ENCODE measurements at regions of chr3 and their contacts with region 1.

Region 1: DNA sequence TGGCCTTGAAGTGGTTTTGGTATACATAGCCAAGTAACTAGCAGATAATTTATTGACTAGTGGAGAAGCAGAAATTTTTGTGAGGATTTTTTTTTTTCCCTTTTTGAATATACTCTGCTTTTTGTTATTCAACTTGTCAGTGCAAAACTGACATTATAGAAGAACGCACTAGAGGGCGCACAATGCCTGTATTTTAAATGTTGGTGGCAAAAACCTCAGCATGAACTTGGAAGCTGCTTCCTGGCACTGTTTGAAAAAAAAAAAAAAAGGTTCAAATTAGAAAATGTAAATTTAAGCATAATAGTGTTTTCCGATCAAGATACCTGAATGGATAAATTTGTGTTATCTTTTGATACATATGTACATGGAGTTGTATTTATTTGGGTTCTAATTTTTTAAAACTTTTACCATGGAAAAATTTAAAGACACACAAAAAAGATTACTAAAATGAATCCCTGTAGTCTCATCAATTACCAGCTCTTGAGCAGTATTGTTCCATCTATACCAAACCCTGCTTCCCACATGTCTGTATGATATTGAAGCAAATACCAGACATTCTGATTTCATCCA is 56.0 kb downstream of the SLC25A26 start:
- DNase-seq: peak; percentile 39 to 76 (median 54)
- H3K4me3 ChIP-seq: no peak overlapping the region
- H3K4me3 Mint-ChIP-seq: no peak overlapping the region
- H3K27ac ChIP-seq: no peak overlapping the region
- H3K27ac Mint-ChIP-seq: peak overlapping the region; percentile 4 to 89 (median 60)
- H3K4me1 ChIP-seq: peaks cover 30% of the 10 kb centered on the region
- H3K4me1 Mint-ChIP-seq: peaks cover 42 to 48% (median 45%) of the 10 kb centered on the region in 3 donors
- H3K27me3 ChIP-seq: no peaks in the 10 kb centered on the region
- H3K27me3 Mint-ChIP-seq: no peaks in the 10 kb centered on the region

Region 2: GRCh38 chr3:66302288-66302687 is 25.5 kb after region 1 on chr3:
- CTCF ChIA-PET with region 1: interaction called, 14 read pairs
- POLR2A ChIA-PET with region 1: interaction called, 6 read pairs
- DNase-seq: peak; percentile 23 to 83 (median 58)
- H3K4me3 ChIP-seq: no peak overlapping the region
- H3K4me3 Mint-ChIP-seq: peak overlapping the region; percentile 41 to 70 (median 58)
- H3K27ac ChIP-seq: peak overlapping the region; percentile 94
- H3K27ac Mint-ChIP-seq: peak overlapping the region in 2 of 8 donors; percentile 97 to 99
- H3K4me1 ChIP-seq: peaks cover 85% of the 10 kb centered on the region
- H3K4me1 Mint-ChIP-seq: peaks cover 23 to 26% (median 25%) of the 10 kb centered on the region in 3 donors
- H3K27me3 ChIP-seq: no peaks in the 10 kb centered on the region
- H3K27me3 Mint-ChIP-seq: no peaks in the 10 kb centered on the region

Region 3: DNA sequence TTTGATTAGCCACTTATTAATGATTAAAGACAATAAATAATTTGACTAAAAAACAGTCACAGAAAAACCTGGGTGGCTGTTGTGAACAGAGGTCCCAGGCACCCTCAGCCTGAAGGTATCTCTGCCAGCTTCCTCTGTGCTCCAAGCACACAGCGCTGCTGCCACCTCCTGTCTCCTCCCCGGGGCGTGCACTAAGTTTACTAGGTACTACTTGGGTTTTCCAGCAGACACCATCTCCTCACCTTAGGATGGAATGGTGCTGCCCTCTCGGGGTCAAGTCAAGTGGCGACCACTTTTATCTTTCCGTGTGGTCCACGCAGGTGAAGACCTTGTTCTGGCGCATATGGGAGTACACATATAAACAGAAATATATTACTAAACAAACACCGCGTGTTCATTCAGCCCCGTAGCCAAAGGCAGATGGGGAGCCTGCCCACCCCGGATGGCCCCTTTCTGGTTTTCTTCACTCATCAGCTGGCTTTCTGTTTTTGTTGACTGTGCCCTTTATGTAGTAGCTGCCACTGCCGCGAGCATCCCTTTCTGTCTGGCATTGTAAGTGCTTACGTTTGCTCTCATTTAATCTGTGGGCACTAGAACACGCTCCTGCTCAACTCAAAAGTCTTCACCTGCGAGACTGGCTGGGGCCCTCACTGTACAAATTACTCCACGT is 96.0 kb after region 1 on chr3:
- CTCF ChIA-PET with region 1: interaction called, 48 read pairs
- POLR2A ChIA-PET with region 1: no interaction called
- DNase-seq: peak in 4 of 5 donors; percentile 28 to 84 (median 47)
- H3K4me3 ChIP-seq: no peak overlapping the region
- H3K4me3 Mint-ChIP-seq: no peak overlapping the region
- H3K27ac ChIP-seq: no peak overlapping the region
- H3K27ac Mint-ChIP-seq: peak overlapping the region; percentile 7 to 85 (median 68)
- H3K4me1 ChIP-seq: peaks cover 9% of the 10 kb centered on the region
- H3K4me1 Mint-ChIP-seq: peaks cover 25 to 36% (median 34%) of the 10 kb centered on the region in 3 donors
- H3K27me3 ChIP-seq: no peaks in the 10 kb centered on the region
- H3K27me3 Mint-ChIP-seq: no peaks in the 10 kb centered on the region

Region 4: DNA sequence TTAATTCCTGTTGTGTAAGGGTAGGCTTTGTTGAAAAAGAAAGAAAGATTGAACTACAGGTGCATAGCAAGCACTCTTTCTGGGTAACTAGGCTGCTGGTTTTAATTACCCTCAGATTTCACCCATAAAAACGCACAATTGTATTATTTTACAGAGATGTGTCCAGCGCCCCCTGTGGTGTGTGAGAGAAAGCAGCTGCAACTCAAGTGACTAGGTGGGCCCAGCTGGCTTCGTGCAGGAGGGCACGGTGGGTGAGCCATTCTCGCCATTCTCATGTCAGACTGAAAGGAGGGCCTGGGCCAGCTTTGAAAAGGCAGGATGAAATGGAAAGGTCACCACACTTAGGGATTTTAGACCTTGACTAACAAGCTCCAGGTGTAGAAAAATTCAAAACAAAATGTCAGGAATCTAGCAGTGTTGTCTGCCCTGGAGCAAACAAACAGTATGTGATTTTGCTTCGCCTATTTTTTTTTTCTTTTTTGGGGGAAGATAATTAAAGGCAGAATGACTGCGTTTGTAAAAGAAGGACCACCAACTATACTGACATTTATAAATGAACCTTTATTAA is 101.5 kb after region 1 on chr3:
- CTCF ChIA-PET with region 1: interaction called, 48 read pairs
- POLR2A ChIA-PET with region 1: no interaction called
- DNase-seq: peak in 4 of 5 donors; percentile 10 to 44 (median 30)
- H3K4me3 ChIP-seq: no peak overlapping the region
- H3K4me3 Mint-ChIP-seq: peak overlapping the region in 1 of 7 donors; percentile 42
- H3K27ac ChIP-seq: no peak overlapping the region
- H3K27ac Mint-ChIP-seq: peak overlapping the region; percentile 63 to 99 (median 83)
- H3K4me1 ChIP-seq: peaks cover 15% of the 10 kb centered on the region
- H3K4me1 Mint-ChIP-seq: peaks cover 11 to 21% (median 21%) of the 10 kb centered on the region in 3 donors
- H3K27me3 ChIP-seq: no peaks in the 10 kb centered on the region
- H3K27me3 Mint-ChIP-seq: no peaks in the 10 kb centered on the region

Region 5: GRCh38 chr3:66394019-66394752 is 117.4 kb after region 1 on chr3:
- CTCF ChIA-PET with region 1: interaction called, 6 read pairs
- POLR2A ChIA-PET with region 1: interaction called, 10 read pairs
- DNase-seq: peak; percentile 42 to 81 (median 54)
- H3K4me3 ChIP-seq: peak overlapping the region; percentile 41
- H3K4me3 Mint-ChIP-seq: peak overlapping the region; percentile 77 to 91 (median 90)
- H3K27ac ChIP-seq: peak overlapping the region; percentile 34
- H3K27ac Mint-ChIP-seq: peak overlapping the region; percentile 88 to 99 (median 96)
- H3K4me1 ChIP-seq: peaks cover 47% of the 10 kb centered on the region
- H3K4me1 Mint-ChIP-seq: peaks cover 53 to 62% (median 61%) of the 10 kb centered on the region in 3 donors
- H3K27me3 ChIP-seq: no peaks in the 10 kb centered on the region
- H3K27me3 Mint-ChIP-seq: no peaks in the 10 kb centered on the region

Region 6: DNA sequence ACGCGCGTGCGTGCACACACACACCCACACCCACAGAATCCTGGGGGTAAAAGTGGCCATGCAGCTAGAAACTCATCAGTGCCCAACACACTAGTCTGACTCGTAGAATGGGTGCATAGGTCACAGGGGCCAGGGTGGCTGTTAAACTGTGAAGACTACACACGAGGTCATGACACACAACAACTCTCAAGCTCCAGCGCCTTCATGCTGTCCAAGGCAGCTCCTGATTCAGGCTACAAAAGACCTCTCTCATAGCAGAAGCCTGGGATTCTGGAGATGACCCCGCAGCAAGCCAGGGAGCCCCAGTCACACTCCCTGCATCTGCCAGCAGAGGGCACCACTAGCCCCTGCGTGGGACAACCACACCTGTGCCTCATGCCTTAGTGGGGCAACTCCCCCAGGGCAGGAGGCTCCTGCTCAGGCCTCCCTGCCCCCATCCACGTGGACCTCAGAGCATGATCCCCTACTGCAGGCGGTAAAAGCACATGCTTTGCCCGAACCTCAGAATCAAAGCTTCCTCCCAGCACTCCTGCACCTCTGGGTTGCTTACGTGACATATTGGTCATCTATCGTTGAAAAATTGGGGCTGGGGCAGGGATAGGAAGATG is 130.9 kb after region 1 on chr3:
- CTCF ChIA-PET with region 1: interaction called, 17 read pairs
- POLR2A ChIA-PET with region 1: no interaction called
- DNase-seq: peak; percentile 54 to 79 (median 59)
- H3K4me3 ChIP-seq: no peak overlapping the region
- H3K4me3 Mint-ChIP-seq: no peak overlapping the region
- H3K27ac ChIP-seq: no peak overlapping the region
- H3K27ac Mint-ChIP-seq: peak overlapping the region in 3 of 8 donors; percentile 7 to 45 (median 38)
- H3K4me1 ChIP-seq: no peaks in the 10 kb centered on the region
- H3K4me1 Mint-ChIP-seq: peaks cover 3% of the 10 kb centered on the region in 3 donors
- H3K27me3 ChIP-seq: no peaks in the 10 kb centered on the region
- H3K27me3 Mint-ChIP-seq: no peaks in the 10 kb centered on the region